Activated naive CD4-positive, alpha-beta T cell treated with anti-CD3 and anti-CD28 coated beads, Interleukin-2, amount 10 ng/mL, durations not matched to agents 7 days and 5 days (primary cell): ENCODE measurements at regions of chr19 and their contacts with region 1.

Region 1: DNA sequence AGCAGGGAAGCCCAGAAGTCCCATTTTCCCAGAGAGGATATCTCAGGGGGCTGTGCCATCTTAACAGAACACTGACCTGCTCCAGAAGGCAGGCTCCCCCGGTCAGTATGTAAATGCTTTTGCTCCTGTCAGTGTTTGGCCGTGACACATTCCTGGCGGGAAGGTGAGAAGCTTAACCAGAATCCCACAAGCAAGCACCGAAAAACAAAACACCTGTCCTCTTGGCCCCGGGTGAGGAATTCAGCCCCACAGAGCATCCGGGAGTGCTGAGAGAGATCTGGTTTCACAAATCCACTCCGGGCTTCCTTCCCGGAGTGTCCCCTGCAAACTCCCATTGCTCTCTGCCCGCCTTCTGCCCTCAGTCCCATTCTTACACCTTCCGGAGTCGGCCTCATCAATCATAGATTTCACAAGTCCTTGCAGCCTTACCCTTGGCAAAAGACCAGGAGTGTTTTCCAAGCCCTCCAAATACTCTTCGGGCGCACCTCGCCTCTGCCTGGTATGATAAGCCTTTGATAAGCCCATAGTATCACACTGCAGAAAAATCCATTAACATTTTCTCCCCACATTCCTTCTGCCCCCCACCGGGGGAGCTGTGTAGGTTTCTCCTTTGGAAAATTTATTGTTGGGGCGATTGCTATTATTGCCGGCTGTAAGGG is 12.2 kb downstream of the TPM4 start:
- DNase-seq: no peak
- H3K4me3 Mint-ChIP-seq: no peak overlapping the region
- H3K27ac Mint-ChIP-seq: peak overlapping the region; percentile 80
- H3K4me1 Mint-ChIP-seq: peaks cover 58% of the 10 kb centered on the region
- H3K27me3 Mint-ChIP-seq: no peaks in the 10 kb centered on the region

Region 2: GRCh38 chr19:16070366-16070990 is 18.0 kb before region 1 on chr19:
- CTCF ChIA-PET with region 1: interaction called, 14 read pairs
- DNase-seq: peak; percentile 91
- H3K4me3 Mint-ChIP-seq: no peak overlapping the region
- H3K27ac Mint-ChIP-seq: no peak overlapping the region
- H3K4me1 Mint-ChIP-seq: peaks cover 51% of the 10 kb centered on the region
- H3K27me3 Mint-ChIP-seq: no peaks in the 10 kb centered on the region

Region 3: GRCh38 chr19:16076154-16076957 is 12.1 kb before region 1 on chr19 and contains the start of gene TPM4:
- CTCF ChIA-PET with region 1: interaction called, 14 read pairs
- DNase-seq: peak; percentile 93
- H3K4me3 Mint-ChIP-seq: peak within 1 kb of the TSS; percentile 84
- H3K27ac Mint-ChIP-seq: peak within 1 kb of the TSS; percentile 99
- H3K4me1 Mint-ChIP-seq: peaks cover 72% of the 10 kb centered on the region
- H3K27me3 Mint-ChIP-seq: no peaks in the 10 kb centered on the region